HEK293 (cell line): ENCODE measurements at regions of chr17 and their contacts with region 1.

Region 1: GRCh38 chr17:49556223-49556971 is 19.3 kb upstream of the NXPH3 start:
- H3K4me3 ChIP-seq: no peak overlapping the region
- H3K27ac ChIP-seq: peak overlapping the region; percentile 12; the same call in 1 of the 2 replicates
- H3K4me1 ChIP-seq: 0 out of 2 replicates have a peak, but pooled peaks cover 2% of the 10 kb centered on the region
- CTCF ChIP-seq: peak; percentile 97

Region 2: DNA sequence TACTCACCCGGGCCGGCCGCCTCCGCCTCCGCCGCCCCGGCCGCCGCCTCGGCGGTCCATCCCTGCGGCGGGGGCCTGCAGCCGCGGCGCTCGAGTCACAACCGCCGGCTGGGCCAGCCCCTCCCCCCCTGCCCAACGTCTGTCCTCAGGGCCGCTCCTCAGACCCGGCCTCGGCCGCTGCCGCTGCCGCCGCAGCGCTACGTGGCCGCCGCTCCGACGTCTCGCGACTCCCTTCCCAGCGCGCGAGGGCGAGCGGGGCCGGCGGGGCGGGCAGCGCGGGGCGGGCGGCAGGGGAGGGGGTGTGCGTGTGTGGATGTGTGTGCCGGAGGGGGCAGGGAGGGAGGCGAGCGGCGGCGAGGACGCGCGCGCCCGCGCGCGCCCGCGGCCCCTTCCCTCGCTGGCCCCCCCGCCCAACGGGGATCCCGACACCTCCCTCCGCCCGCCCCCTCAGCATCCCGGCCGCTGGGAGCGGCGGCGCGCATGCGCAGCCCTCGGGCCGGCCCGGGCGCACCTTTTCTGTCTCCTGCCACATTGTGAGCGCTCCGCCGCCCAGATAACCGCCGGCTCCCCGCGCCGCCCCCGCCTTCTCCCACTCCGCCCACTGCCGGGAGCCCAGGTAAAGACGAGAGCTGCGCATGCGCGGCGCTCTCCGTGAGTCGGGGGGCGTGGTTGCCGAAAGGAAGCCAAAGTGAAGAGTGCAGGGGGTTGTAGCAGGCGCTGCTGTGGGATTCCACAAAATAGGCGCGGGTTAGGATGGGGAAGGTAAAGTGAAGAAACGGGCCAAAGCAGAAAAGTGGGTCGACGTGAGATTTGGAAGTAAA is 194.3 kb before region 1 on chr17 and contains the start of gene ZNF652:
- CTCF ChIA-PET with region 1: interaction called, 13 read pairs
- POLR2A ChIA-PET with region 1: no interaction called
- H3K4me3 ChIP-seq: peak within 1 kb of the TSS; percentile 94
- H3K27ac ChIP-seq: peak within 1 kb of the TSS; percentile 98
- H3K4me1 ChIP-seq: peaks cover 32% of the 10 kb centered on the region
- CTCF ChIP-seq: no peak

Region 3: GRCh38 chr17:49414622-49415350 is 141.6 kb before region 1 on chr17 and contains the start of gene PHB1:
- CTCF ChIA-PET with region 1: interaction called, 174 read pairs
- POLR2A ChIA-PET with region 1: interaction called, 7 read pairs
- H3K4me3 ChIP-seq: peak within 1 kb of the TSS; percentile 94
- H3K27ac ChIP-seq: peak within 1 kb of the TSS; percentile 45; the same call in 1 of the 2 replicates
- H3K4me1 ChIP-seq: peaks cover 7% of the 10 kb centered on the region; the same call in 1 of the 2 replicates
- CTCF ChIP-seq: no peak

Region 4: DNA sequence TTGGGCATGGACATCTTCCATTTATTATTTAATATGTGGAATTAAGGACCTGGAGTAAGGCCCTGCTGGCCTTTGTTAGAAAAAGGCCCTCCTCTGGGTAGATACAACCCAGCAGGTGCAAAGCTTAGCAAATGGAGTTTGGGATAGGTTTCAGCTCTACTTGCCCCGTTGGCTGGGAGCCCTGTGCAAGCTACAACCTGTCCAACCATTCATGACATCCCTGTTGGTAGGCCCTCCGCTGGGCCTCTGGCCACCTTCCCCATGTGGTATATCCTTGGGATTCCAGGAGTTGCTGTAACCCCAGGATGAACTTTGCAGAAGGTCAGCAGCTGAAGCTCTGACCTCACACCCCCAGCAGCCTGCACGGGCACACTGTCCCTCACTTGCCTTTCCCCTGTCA is 54.9 kb before region 1 on chr17:
- CTCF ChIA-PET with region 1: interaction called, 44 read pairs
- POLR2A ChIA-PET with region 1: no interaction called
- H3K4me3 ChIP-seq: no peak overlapping the region
- H3K27ac ChIP-seq: no peak overlapping the region
- H3K4me1 ChIP-seq: peaks cover 7% of the 10 kb centered on the region; the same call in 1 of the 2 replicates
- CTCF ChIP-seq: no peak

Region 5: DNA sequence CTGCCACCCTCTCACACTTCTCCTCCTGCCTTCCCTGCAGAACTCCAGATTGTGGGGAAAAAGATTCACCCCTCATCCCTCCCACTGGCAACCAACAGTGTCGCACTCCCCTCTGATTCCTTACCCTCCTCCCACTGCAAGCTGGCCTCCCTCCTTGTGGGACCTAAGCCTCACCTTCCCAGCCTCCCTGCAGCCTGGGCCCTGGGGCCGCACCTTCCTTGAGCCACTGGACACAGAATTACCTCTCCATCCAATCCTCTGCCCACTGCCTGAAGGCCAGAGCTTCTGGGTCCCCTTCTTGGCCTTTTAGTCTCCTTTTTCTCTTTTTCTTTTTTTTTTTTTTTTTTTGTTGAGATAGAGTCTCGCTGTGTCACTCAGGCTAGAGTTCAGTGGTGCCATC is 27.4 kb before region 1 on chr17:
- CTCF ChIA-PET with region 1: interaction called, 27 read pairs
- POLR2A ChIA-PET with region 1: interaction called, 6 read pairs
- H3K4me3 ChIP-seq: no peak overlapping the region
- H3K27ac ChIP-seq: no peak overlapping the region
- H3K4me1 ChIP-seq: no peaks in the 10 kb centered on the region
- CTCF ChIP-seq: no peak

Region 6: GRCh38 chr17:49707608-49708514 is 151.5 kb after region 1 on chr17 and contains the start of gene SLC35B1:
- CTCF ChIA-PET with region 1: interaction called, 121 read pairs
- POLR2A ChIA-PET with region 1: no interaction called
- H3K4me3 ChIP-seq: peak within 1 kb of the TSS; percentile 88
- H3K27ac ChIP-seq: peak within 1 kb of the TSS; percentile 93
- H3K4me1 ChIP-seq: no peaks in the 10 kb centered on the region
- CTCF ChIP-seq: peak; percentile 99